H1 (cell line): ENCODE measurements at regions of chr3 and their contacts with region 1.

Region 1: GRCh38 chr3:178966299-178967176 is 105.1 kb downstream of the ZMAT3 start:
- DNase-seq: no peak
- H3K4me3 ChIP-seq: no peak overlapping the region
- H3K27ac ChIP-seq: no peak overlapping the region
- H3K4me1 ChIP-seq: peaks cover 0 to 4% (median 2%) of the 10 kb centered on the region in 4 experiments; a peak in 3 of 7 replicates
- H3K27me3 ChIP-seq: no peaks in the 10 kb centered on the region
- CTCF ChIP-seq: peak in 2 of 3 experiments; percentile 21 to 40; a peak in 2 of 4 replicates
- EP300 ChIP-seq: no peak
- POLR2A ChIP-seq: no peak
- RAD21 ChIP-seq: peak; percentile 55 to 61

Region 2: GRCh38 chr3:178950676-178951075 is 15.9 kb before region 1 on chr3:
- CTCF ChIA-PET with region 1: interaction called, 12 read pairs
- POLR2A ChIA-PET with region 1: no interaction called
- DNase-seq: no peak
- H3K4me3 ChIP-seq: no peak overlapping the region
- H3K27ac ChIP-seq: no peak overlapping the region
- H3K4me1 ChIP-seq: no peaks in the 10 kb centered on the region
- H3K27me3 ChIP-seq: no peaks in the 10 kb centered on the region
- CTCF ChIP-seq: no peak
- EP300 ChIP-seq: no peak
- POLR2A ChIP-seq: no peak
- RAD21 ChIP-seq: no peak